Activated naive CD4-positive, alpha-beta T cell treated with anti-CD3 and anti-CD28 coated beads, Interleukin-2, amount 10 ng/mL, durations not matched to agents 7 days and 5 days (primary cell): ENCODE measurements at regions of chr9 and their contacts with region 1.

Region 1: DNA sequence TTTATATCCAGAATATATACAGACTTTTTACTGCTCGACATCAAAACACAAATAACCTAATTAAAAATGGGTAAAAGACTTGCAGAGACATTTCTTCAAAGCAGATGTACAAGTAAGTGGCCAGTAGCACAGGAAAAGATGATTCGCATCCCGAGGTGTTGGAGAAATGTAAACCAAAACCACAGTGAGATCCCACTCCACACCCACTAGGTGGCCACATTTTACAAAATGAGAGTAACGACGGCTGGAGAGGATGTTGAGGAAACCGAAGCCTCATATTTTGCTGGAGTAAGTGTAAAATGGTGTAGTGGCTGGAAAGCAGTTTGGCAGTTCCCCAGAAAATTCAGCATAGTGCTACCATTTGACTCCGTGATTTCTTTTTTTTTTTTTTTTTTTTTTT is 21.2 kb upstream of the GBGT1 start:
- DNase-seq: peak; percentile 66
- H3K4me3 Mint-ChIP-seq: no peak overlapping the region
- H3K27ac Mint-ChIP-seq: no peak overlapping the region
- H3K4me1 Mint-ChIP-seq: peaks cover 17% of the 10 kb centered on the region
- H3K27me3 Mint-ChIP-seq: peaks cover 67% of the 10 kb centered on the region

Region 2: DNA sequence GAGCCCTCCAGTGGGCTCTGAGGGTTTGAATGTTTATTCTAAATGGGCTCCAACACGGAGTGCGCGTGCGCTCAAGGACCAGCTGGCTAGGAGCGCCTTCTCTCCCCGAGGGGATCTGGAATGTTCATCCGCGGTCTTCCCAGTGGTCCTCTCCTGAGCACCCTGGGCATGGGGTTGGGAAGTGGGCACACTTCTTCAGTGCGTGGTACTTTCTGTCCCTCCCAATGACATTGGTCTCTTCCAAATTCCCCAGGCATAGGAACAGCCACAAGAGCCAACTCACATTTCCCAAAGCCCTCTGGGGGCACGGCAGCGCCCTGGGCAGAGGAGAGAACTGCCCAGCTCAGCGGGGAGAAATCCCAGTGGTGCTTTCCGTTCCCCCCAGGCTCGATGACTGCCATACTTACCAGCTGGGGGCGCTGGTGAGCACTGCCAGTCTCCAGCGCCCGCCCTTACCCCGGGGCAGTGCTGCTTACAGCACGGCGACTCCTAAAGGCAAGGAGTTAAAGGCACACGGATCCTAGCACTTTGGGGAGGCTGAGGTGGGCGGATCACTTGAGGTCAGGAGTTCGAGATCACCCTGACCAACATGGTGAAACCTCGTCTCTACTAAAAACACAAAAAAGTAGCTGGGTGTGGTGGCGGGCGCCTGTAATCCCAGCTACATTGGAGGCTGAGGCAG is 54.0 kb after region 1 on chr9:
- CTCF ChIA-PET with region 1: interaction called, 12 read pairs
- DNase-seq: peak; percentile 76
- H3K4me3 Mint-ChIP-seq: no peak overlapping the region
- H3K27ac Mint-ChIP-seq: no peak overlapping the region
- H3K4me1 Mint-ChIP-seq: peaks cover 14% of the 10 kb centered on the region
- H3K27me3 Mint-ChIP-seq: peaks cover 56% of the 10 kb centered on the region

Region 3: DNA sequence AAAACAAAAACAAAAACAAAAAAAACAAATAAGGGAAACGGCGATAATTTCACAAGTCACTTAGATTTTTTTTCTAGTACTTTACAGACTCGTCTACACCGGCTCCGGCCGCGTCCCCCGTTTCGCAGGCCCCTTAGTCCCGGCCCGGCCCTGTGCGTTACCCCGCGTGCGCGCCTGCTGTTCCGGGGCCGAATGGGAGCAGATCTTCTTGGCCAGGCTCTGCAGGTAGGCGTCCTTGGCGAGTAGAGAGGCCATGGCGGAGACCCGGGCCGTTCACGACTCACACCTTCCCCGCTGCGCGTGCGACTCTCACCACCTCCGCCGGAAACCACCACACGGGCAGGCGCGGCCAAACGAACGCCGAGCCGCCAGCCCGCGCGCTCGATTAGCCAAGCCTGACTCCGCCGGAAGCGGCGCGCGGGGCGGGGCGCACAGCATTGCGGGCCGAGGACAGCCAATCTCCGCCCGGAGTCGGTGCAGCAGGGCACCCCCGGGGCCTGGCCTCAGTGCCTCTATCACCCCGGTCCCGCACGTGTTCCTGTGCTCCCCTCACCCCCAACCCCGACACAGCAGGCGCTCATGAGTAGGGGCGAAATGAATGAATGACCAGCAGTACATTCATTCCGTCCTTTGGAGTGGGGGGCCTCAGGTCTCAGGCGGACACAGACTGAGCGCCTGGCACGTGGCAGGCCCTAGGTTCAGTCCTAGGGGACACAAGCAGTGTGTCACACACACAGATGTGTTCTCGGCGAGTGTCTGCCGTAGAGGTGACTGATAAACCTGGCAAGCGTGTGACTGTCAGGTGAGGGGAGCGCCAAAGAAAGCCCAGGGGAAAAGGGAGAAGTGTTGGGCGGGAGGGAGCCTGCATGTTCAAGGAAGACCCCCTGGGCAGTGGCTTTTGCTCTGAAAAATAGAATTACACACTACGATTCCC is 151.2 kb after region 1 on chr9 and contains the start of gene SURF6:
- CTCF ChIA-PET with region 1: interaction called, 20 read pairs
- DNase-seq: peak; percentile 94
- H3K4me3 Mint-ChIP-seq: peak within 1 kb of the TSS; percentile 96
- H3K27ac Mint-ChIP-seq: peak within 1 kb of the TSS; percentile 96
- H3K4me1 Mint-ChIP-seq: peaks cover 63% of the 10 kb centered on the region
- H3K27me3 Mint-ChIP-seq: no peaks in the 10 kb centered on the region

Region 4: GRCh38 chr9:133406480-133407307 is 221.7 kb after region 1 on chr9:
- CTCF ChIA-PET with region 1: interaction called, 28 read pairs
- DNase-seq: peak; percentile 84
- H3K4me3 Mint-ChIP-seq: no peak overlapping the region
- H3K27ac Mint-ChIP-seq: peak overlapping the region; percentile 8
- H3K4me1 Mint-ChIP-seq: peaks cover 5% of the 10 kb centered on the region
- H3K27me3 Mint-ChIP-seq: no peaks in the 10 kb centered on the region

Region 5: GRCh38 chr9:133485361-133486260 is 300.6 kb after region 1 on chr9:
- CTCF ChIA-PET with region 1: interaction called, 39 read pairs
- DNase-seq: peak; percentile 38
- H3K4me3 Mint-ChIP-seq: no peak overlapping the region
- H3K27ac Mint-ChIP-seq: no peak overlapping the region
- H3K4me1 Mint-ChIP-seq: peaks cover 10% of the 10 kb centered on the region
- H3K27me3 Mint-ChIP-seq: peaks cover 42% of the 10 kb centered on the region